Activated T-helper 2 cell treated with anti-CD3 and anti-CD28 coated beads, Interferon-gamma antibody, Interleukin-2, Interleukin-4, amounts not matched to agents 10 μg/mL and 5 μg/mL and 100 μg/mL, durations not matched to agents 14 hours and 24 hours and 36 hours (primary cell): ENCODE measurements at regions of chr16 and their contacts with region 1.

Region 1: DNA sequence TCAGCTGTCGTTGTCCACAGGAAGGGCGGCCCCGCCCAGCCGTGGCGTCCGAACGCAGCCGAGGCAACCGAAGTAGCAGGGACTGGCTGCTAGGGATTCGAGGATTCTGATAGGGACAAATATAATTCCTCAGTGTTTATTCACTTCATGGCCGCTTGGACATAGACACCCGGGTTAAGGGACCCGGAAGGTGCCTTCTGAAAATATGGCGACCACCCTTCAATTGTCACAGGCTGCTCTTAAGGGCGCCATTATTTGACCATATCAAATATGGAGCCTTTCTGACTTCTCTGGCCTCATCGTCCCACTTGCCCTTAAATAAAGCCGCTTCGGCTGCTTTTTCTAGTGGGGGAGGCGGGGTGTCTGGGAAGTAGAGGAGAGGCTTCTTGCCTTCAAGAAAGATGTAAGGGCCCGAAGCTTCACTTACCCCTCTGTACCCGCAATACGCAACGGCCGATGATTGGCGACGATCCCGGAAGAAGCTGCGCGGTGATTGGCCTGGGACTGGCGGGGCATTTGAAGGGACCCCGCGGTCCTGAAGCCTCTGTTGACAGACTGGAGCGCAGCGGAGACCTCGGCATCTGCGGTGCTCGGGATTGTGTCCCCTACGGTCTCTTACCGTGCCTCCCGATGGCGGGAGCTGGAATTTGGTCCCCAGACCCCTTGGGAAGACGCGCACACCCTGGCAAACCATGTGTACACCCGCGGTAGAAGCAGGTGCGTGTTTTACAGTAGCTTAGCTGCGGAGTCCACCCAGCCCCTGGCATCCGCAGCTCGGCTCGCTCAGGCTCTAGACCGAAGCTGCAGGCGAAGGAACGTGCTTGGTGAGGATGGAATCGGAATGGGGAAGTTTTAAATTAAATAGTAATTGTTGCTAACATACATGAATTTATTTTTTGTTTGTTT is at the start of gene ZNF688:
- DNase-seq: peak; percentile 94
- H3K4me3 Mint-ChIP-seq: peak within 1 kb of the TSS; percentile 90
- H3K27ac Mint-ChIP-seq: peak within 1 kb of the TSS; percentile 85
- H3K4me1 Mint-ChIP-seq: peaks cover 38% of the 10 kb centered on the region
- H3K27me3 Mint-ChIP-seq: no peaks in the 10 kb centered on the region
- total RNA-seq, gene ZNF688: 8.7 and 9.2 TPM in 2 replicates

Region 2: DNA sequence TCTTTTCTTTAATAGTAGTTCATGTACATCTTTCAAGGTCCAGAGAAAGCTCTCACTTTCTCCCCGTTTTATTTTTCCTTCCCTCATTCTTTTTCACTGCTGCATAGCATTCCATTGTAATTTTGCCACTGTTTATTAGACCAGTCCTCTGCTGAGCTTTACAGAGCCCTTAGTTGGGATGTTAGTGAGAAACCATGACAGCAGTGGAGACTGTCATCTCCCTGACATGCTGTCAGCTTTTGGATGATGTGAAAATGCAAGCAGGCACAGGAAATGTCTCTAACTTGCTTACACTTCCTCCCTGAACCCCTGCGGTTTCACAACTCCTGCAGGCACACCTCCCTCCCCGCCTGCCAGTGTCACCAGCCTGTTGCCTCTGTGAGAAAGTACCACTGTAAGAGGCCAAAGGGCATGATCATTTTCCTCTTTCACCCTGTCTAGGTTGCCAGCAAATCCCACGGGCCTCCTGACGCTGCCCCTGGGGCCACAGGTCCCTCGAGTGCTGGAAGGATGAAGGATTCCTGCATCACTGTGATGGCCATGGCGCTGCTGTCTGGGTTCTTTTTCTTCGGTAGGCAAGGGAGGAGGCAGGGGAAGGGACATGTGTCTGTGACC is 99.5 kb before region 1 on chr16 and contains the start of gene ITGAL:
- intact Hi-C with region 1: loop called (anchors 5 kb)
- DNase-seq: peak; percentile 83
- H3K4me3 Mint-ChIP-seq: peak within 1 kb of the TSS; percentile 99
- H3K27ac Mint-ChIP-seq: peak within 1 kb of the TSS; percentile 97
- H3K4me1 Mint-ChIP-seq: peaks cover 52% of the 10 kb centered on the region
- H3K27me3 Mint-ChIP-seq: no peaks in the 10 kb centered on the region
- total RNA-seq, gene ITGAL: 292 and 293 TPM in 2 replicates

Region 3: DNA sequence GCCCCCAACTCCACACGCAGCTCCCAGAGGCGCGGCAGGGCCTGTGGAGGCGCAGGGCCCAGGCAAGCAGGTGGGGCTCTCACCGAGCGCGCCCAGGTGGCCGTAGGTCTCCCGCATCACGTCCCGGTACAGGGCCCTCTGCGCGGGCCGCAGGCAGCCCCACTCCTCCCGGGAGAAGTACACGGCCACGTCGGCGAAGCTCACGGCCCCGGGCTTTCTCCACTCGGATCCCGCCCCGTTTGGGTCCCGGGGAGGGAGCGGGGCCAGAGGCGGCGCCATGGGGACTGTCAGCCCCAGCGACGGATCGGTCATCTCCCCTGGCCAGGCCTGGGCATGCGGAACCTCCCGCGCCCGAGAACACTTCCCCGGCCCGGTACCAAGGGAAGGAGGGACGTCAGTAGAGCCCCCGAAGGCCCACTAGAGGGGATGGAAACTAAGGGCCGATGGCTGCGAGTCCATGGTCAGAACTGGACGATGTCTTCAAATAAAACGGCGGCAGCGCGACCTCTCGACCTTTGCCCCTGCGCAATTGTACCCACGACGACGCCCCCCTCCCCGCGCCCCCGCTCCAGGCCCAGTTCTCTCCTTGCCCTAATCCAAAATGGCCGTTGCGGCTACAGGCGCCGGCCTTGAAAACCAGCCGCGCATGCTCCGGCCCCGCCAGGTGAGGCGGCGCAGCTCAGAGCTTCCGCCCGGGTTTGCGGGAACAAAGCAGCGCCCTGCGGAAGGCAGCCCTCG is 37.4 kb before region 1 on chr16 and contains the start of gene ZNF747:
- intact Hi-C with region 1: loop called (anchors 1 kb)
- DNase-seq: peak; percentile 86
- H3K4me3 Mint-ChIP-seq: peak within 1 kb of the TSS; percentile 99
- H3K27ac Mint-ChIP-seq: peak within 1 kb of the TSS; percentile 100
- H3K4me1 Mint-ChIP-seq: peaks cover 27% of the 10 kb centered on the region
- H3K27me3 Mint-ChIP-seq: no peaks in the 10 kb centered on the region
- total RNA-seq, gene ZNF747: 11.8 and 11.9 TPM in 2 replicates

Region 4: DNA sequence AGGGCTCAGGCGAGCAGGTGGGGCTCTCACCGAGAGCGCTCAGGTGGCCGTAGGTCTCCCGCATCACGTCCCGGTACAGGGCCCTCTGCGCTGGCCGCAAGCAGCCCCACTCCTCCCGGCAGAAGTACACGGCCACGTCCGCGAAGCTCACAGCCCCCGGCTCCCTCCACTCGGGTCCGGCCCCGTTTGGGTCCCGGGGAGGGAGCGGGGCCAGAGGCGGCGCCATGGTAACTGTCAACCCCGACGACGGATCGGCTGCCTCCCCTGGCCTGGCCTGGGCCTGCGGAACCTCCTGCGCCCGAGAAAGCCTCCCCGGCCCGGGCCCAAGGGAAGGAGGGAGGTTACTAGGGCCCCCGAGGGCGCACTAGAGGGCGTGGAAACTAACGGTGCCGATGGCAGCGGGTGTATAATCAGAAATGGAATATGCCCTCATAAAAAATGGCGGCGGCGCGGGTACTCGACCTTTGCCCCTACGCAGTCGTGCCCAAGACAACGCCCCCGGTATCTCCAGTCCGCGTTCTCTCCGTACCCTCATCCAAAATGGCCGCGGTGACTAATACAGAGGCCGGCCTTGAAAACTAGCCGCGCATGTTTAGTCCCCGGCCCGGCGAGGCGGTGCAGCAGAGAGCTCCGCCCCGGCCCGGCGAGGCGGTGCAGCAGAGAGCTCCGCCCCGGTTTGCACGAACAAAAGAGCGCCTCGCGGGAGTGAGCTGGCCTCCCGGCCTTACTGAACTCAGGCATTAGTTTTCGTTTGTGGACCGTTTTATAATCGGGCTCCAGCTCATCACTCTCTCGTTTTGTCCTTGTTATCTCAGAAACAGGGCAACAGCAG is 13.8 kb before region 1 on chr16 and contains the start of gene ZNF764:
- intact Hi-C with region 1: loop called (anchors 1 kb)
- DNase-seq: peak; percentile 97
- H3K4me3 Mint-ChIP-seq: peak within 1 kb of the TSS; percentile 83
- H3K27ac Mint-ChIP-seq: peak within 1 kb of the TSS; percentile 95
- H3K4me1 Mint-ChIP-seq: peaks cover 35% of the 10 kb centered on the region
- H3K27me3 Mint-ChIP-seq: peaks cover 1% of the 10 kb centered on the region
- total RNA-seq, gene ZNF764: 14.5 and 14.6 TPM in 2 replicates

Region 5: GRCh38 chr16:30609926-30610839 is 38.2 kb after region 1 on chr16 and contains the start of gene ZNF689:
- intact Hi-C with region 1: loop called (anchors 2 kb)
- DNase-seq: peak; percentile 93
- H3K4me3 Mint-ChIP-seq: peak within 1 kb of the TSS; percentile 87
- H3K27ac Mint-ChIP-seq: peak within 1 kb of the TSS; percentile 96
- H3K4me1 Mint-ChIP-seq: peaks cover 16% of the 10 kb centered on the region
- H3K27me3 Mint-ChIP-seq: no peaks in the 10 kb centered on the region
- total RNA-seq, gene ZNF689: 11.4 and 12.4 TPM in 2 replicates

Region 6: DNA sequence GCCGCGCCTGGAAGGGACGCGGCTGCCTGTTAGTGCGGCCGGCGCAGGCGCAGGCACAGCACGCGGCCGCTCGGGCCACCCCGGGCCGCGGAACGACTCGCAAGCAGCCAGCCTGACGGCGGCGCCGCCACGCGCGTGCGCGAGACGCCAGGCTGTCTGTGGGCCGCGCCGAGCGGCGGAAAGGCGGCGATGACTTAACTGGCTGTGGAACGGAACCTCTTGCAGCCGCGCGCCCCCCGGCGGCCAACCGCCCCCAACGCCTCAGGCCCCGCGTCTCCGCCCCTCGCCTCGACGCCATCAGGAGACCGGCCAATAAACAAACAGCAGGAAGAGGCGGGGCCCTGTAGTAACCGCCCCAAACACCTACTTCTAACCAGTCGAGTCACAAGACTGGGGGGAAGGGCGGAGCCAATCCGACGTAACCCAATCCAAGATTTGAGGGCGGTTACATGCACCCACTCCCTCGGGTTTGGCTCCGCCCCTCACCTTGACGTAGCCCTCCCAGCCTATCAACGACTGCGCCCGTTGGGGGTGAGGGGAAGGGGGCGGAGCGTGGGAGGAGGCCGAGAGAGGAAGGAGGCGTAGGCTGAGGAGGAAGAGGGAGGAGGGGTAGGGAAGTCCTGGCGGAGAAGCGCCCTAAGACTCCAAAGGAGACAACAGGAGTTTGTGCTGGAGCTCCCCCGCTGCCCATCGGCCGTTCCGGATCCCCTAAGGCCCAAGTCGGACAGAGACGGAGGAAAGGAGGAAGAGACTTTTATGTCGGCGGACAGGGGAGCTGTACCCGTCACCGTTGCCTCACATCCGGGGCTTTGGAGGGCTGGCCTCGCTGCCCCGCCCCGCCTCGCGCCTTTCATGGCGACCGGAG is 86.2 kb after region 1 on chr16 and contains the start of gene FBRS:
- intact Hi-C with region 1: loop called (anchors 2 kb)
- DNase-seq: peak; percentile 100
- H3K4me3 Mint-ChIP-seq: peak within 1 kb of the TSS; percentile 89
- H3K27ac Mint-ChIP-seq: peak within 1 kb of the TSS; percentile 100
- H3K4me1 Mint-ChIP-seq: peaks cover 27% of the 10 kb centered on the region
- H3K27me3 Mint-ChIP-seq: no peaks in the 10 kb centered on the region
- total RNA-seq, gene FBRS: 107 TPM in 2 replicates

Region 7: GRCh38 chr16:30786936-30787612 is 215.1 kb after region 1 on chr16 and contains the start of gene ZNF629:
- intact Hi-C with region 1: no loop called
- DNase-seq: no peak
- H3K4me3 Mint-ChIP-seq: peak within 1 kb of the TSS; percentile 51
- H3K27ac Mint-ChIP-seq: no peak within 1 kb of the TSS
- H3K4me1 Mint-ChIP-seq: peaks cover 1% of the 10 kb centered on the region
- H3K27me3 Mint-ChIP-seq: peaks cover 33% of the 10 kb centered on the region
- total RNA-seq, gene ZNF629: 0.78 and 0.82 TPM in 2 replicates